Body of pancreas (tissue), 4 donors: ENCODE measurements at regions of chr16 and their contacts with region 1.

Region 1: GRCh38 chr16:53449632-53450517 is 15.6 kb downstream of the RBL2 start:
- DNase-seq: no peak
- ATAC-seq: no peak
- H3K4me3 ChIP-seq: no peak overlapping the region
- H3K27ac ChIP-seq: no peak overlapping the region
- H3K4me1 ChIP-seq: no peaks in the 10 kb centered on the region
- H3K27me3 ChIP-seq: no peaks in the 10 kb centered on the region
- CTCF ChIP-seq: no peak
- POLR2A ChIP-seq: no peak

Region 2: GRCh38 chr16:53281280-53281679 is 168.6 kb before region 1 on chr16:
- intact Hi-C with region 1: no loop called
- DNase-seq: no peak
- ATAC-seq: no peak
- H3K4me3 ChIP-seq: no peak overlapping the region
- H3K27ac ChIP-seq: peak overlapping the region in 2 of 4 donors; percentile 11 to 20
- H3K4me1 ChIP-seq: peaks cover 16% of the 10 kb centered on the region
- H3K27me3 ChIP-seq: no peaks in the 10 kb centered on the region
- CTCF ChIP-seq: no peak
- POLR2A ChIP-seq: no peak

Region 3: DNA sequence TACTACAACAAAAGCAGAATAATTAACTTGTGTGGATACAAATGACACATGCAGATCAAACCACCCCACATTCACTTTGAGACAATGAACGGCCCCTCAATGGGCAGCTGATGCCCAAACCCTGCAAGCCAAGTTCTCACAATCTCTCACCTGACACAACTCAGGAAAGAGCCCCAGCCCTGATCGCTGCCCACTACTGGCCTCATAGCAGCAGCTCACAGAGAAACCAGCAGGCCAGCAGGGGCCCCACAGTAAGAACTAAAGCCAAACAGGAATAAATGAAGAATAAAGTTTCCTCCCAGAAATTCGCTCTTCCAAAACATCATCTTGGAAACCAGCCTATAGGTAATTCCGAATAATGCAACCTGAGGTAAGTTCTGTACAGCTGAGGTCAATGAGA is 45.5 kb after region 1 on chr16:
- intact Hi-C with region 1: loop called (anchors 10 kb)
- DNase-seq: no peak
- ATAC-seq: no peak
- H3K4me3 ChIP-seq: no peak overlapping the region
- H3K27ac ChIP-seq: no peak overlapping the region
- H3K4me1 ChIP-seq: no peaks in the 10 kb centered on the region
- H3K27me3 ChIP-seq: no peaks in the 10 kb centered on the region
- CTCF ChIP-seq: no peak
- POLR2A ChIP-seq: no peak